Right ventricle myocardium inferior (tissue), 1 donor: ENCODE measurements at regions of chr22 and their contacts with region 1.

Region 1: DNA sequence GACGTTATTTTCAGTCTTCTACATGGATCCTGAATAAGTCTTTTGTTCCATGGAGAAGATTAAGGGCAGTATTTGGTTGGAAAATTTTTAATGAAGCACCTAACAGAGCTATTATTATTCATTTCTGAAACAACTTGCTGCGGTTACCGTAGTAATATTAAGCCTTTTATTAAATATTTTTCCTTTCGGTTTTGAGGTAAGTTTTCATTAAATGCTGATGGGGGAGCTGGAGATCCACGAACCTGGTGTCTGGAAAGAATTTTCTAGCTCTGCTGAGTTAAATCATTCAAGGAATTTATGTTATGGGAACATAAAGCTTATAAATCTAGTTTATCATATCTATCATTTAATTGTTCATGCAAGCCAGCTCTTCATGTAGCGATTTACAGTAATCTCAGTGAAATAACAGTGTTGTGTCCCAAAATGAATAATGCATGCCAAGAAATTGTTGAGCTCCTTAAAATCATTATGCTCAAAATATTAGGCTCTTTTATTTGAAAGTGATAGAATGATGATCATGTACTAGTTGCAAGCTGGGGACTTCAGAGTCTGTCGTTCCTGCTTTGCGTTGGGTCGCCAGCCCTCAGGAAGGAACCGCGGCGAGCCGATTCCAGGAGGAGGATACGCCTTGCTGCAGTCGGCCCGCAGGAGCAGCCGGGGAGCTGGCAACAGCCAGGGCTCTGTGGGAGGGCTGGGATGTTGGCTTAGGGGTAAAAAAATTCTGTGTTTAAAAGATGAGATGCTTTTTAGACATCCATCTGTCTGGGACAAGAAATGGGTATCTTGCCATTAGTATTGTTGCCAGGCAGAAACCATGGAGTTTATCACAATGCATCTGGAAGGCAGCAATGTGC is 83.1 kb downstream of the TBC1D22A start:
- DNase-seq: no peak
- ATAC-seq: no peak

Region 2: GRCh38 chr22:48492366-48493320 is 1647.1 kb after region 1 on chr22:
- intact Hi-C with region 1: loop called (anchors 10 kb)
- DNase-seq: peak; percentile 6
- ATAC-seq: peak; percentile 61